CD14-positive monocyte (primary cell): ENCODE measurements at regions of chr1 and their contacts with region 1.

Region 1: GRCh38 chr1:235513495-235514366 is 9.5 kb upstream of the B3GALNT2 start:
- DNase-seq: peak; percentile 56 to 68 (median 61)
- H3K4me3 ChIP-seq: no peak overlapping the region
- H3K4me3 Mint-ChIP-seq: no peak overlapping the region
- H3K27ac ChIP-seq: no peak overlapping the region
- H3K27ac Mint-ChIP-seq: no peak overlapping the region
- H3K4me1 ChIP-seq: peaks cover 3 to 5% of the 10 kb centered on the region in 2 donors
- H3K4me1 Mint-ChIP-seq: peaks cover 7% of the 10 kb centered on the region
- H3K27me3 ChIP-seq: no peaks in the 10 kb centered on the region
- H3K27me3 Mint-ChIP-seq: peaks cover 0 to 4% (median 0%) of the 10 kb centered on the region in 3 donors
- CTCF ChIP-seq: peak; percentile 87

Region 2: GRCh38 chr1:235527196-235527814 is 13.6 kb after region 1 on chr1:
- intact Hi-C with region 1: no loop called
- DNase-seq: no peak
- H3K4me3 ChIP-seq: no peak overlapping the region
- H3K4me3 Mint-ChIP-seq: no peak overlapping the region
- H3K27ac ChIP-seq: no peak overlapping the region
- H3K27ac Mint-ChIP-seq: no peak overlapping the region
- H3K4me1 ChIP-seq: no peaks in the 10 kb centered on the region
- H3K4me1 Mint-ChIP-seq: peaks cover 2% of the 10 kb centered on the region
- H3K27me3 ChIP-seq: no peaks in the 10 kb centered on the region
- H3K27me3 Mint-ChIP-seq: no peaks in the 10 kb centered on the region
- CTCF ChIP-seq: no peak

Region 3: DNA sequence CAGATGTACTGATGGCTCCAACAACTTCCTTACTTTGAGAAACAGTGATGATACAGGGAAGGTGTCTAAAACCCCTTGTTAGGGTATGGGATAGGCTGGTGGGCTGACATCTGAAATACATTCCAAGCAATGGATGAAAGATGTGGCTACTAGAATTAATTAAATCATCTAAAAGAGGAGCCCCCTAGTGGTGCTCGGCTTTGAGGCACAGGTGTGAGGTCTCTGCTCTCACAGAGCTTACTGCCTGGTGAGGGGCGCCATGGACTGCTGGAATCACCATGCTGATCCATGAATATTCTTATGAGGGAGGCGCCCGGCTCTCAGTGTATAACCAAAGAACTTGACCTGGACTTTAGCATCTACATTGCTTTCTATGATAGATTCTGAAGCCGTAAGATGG is 87.4 kb after region 1 on chr1:
- intact Hi-C with region 1: no loop called
- DNase-seq: peak in 1 of 3 donors; percentile 6
- H3K4me3 ChIP-seq: no peak overlapping the region
- H3K4me3 Mint-ChIP-seq: no peak overlapping the region
- H3K27ac ChIP-seq: no peak overlapping the region
- H3K27ac Mint-ChIP-seq: no peak overlapping the region
- H3K4me1 ChIP-seq: no peaks in the 10 kb centered on the region
- H3K4me1 Mint-ChIP-seq: no peaks in the 10 kb centered on the region
- H3K27me3 ChIP-seq: no peaks in the 10 kb centered on the region
- H3K27me3 Mint-ChIP-seq: peaks cover 0 to 14% (median 1%) of the 10 kb centered on the region in 3 donors
- CTCF ChIP-seq: peak; percentile 46

Region 4: GRCh38 chr1:235614442-235614954 is 100.8 kb after region 1 on chr1:
- intact Hi-C with region 1: no loop called
- DNase-seq: no peak
- H3K4me3 ChIP-seq: no peak overlapping the region
- H3K4me3 Mint-ChIP-seq: no peak overlapping the region
- H3K27ac ChIP-seq: no peak overlapping the region
- H3K27ac Mint-ChIP-seq: no peak overlapping the region
- H3K4me1 ChIP-seq: no peaks in the 10 kb centered on the region
- H3K4me1 Mint-ChIP-seq: no peaks in the 10 kb centered on the region
- H3K27me3 ChIP-seq: no peaks in the 10 kb centered on the region
- H3K27me3 Mint-ChIP-seq: peaks cover 3 to 6% (median 5%) of the 10 kb centered on the region in 3 donors
- CTCF ChIP-seq: no peak

Region 5: GRCh38 chr1:235649368-235650163 is 135.8 kb after region 1 on chr1 and contains the start of gene GNG4:
- intact Hi-C with region 1: loop called in 1 of 2 experiments (anchors 10 kb)
- DNase-seq: peak; percentile 10 to 52 (median 32)
- H3K4me3 ChIP-seq: peak within 1 kb of the TSS in 2 of 3 experiments; percentile 36 to 70
- H3K4me3 Mint-ChIP-seq: peak within 1 kb of the TSS; percentile 83 to 97
- H3K27ac ChIP-seq: no peak within 1 kb of the TSS
- H3K27ac Mint-ChIP-seq: peak within 1 kb of the TSS in 4 of 7 donors; percentile 32 to 83 (median 52)
- H3K4me1 ChIP-seq: peaks cover 22 to 23% of the 10 kb centered on the region in 2 donors
- H3K4me1 Mint-ChIP-seq: peaks cover 19% of the 10 kb centered on the region
- H3K27me3 ChIP-seq: peaks cover 57 to 84% of the 10 kb centered on the region in 2 donors
- H3K27me3 Mint-ChIP-seq: peaks cover 77 to 86% (median 85%) of the 10 kb centered on the region in 3 donors
- CTCF ChIP-seq: no peak
- polyA plus RNA-seq, gene GNG4: not detected